HCT116 (cell line): ENCODE measurements at regions of chr7 and their contacts with region 1.

Region 1: DNA sequence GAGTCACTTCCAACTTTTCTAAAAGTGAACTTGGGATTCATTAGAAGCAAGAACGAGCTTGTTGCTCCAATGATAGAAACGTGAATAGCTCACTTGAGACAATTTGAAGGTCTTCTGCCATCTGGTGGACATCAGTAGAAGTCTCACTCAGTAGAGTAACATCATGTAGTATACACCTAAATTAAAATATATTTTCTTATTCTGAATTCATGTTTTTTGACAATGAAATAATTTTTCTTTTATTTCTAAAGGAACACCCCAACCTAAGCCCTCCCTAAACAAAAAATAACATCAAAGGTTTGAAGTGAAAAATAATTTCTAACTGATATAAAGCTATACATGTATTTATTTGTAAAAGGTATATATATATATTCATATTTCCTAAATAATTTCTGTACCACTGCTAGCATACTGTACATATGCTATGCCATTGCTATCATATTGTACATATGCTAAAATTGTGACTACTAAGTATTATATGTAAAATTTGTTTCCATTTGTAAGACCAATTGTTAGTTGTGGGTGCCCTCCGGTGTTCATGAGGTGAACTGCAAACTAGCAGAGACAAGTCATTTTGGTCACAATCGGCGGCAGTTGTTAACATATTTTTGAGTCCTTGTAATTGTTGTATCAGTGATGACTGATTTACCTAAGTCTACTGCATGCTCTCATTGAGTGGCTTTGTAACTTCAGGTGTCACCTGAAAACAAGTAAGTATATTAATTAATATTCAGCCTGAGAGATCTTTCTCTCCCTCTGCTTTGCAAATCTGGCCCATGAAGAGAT is 121.9 kb downstream of the PTPRZ1 start:
- DNase-seq: peak; percentile 78
- ATAC-seq: peak; percentile 93
- H3K4me3 ChIP-seq: no peak overlapping the region
- H3K27ac ChIP-seq: no peak overlapping the region
- H3K4me1 ChIP-seq: no peaks in the 10 kb centered on the region
- H3K27me3 ChIP-seq: no peaks in the 10 kb centered on the region
- CTCF ChIP-seq: peak; percentile 73 to 84 (median 75); a peak in 5 of 6 replicates
- POLR2A ChIP-seq: no peak
- RAD21 ChIP-seq: peak; percentile 85

Region 2: GRCh38 chr7:120792091-120792860 is 1202.5 kb before region 1 on chr7:
- CTCF ChIA-PET with region 1: interaction called, 3 read pairs
- POLR2A ChIA-PET with region 1: no interaction called
- RAD21 ChIA-PET with region 1: no interaction called
- intact Hi-C with region 1: loop called (anchors 1 kb)
- DNase-seq: peak; percentile 65
- ATAC-seq: peak; percentile 100
- H3K4me3 ChIP-seq: no peak overlapping the region
- H3K27ac ChIP-seq: no peak overlapping the region
- H3K4me1 ChIP-seq: peaks cover 2 to 10% of the 10 kb centered on the region in 2 experiments; a peak in 3 of 4 replicates
- H3K27me3 ChIP-seq: no peaks in the 10 kb centered on the region
- CTCF ChIP-seq: peak; percentile 72 to 97 (median 97)
- POLR2A ChIP-seq: no peak
- RAD21 ChIP-seq: peak; percentile 56

Region 3: GRCh38 chr7:121126801-121127534 is 867.9 kb before region 1 on chr7:
- CTCF ChIA-PET with region 1: interaction called, 17 read pairs
- POLR2A ChIA-PET with region 1: no interaction called
- RAD21 ChIA-PET with region 1: interaction called in 1 of 2 experiments, 3 read pairs
- intact Hi-C with region 1: loop called (anchors 2 kb)
- DNase-seq: peak; percentile 51
- ATAC-seq: no peak
- H3K4me3 ChIP-seq: no peak overlapping the region
- H3K27ac ChIP-seq: no peak overlapping the region; the same call in 1 of the 2 replicates
- H3K4me1 ChIP-seq: peaks cover 4 to 28% of the 10 kb centered on the region in 2 experiments; a peak in 3 of 4 replicates
- H3K27me3 ChIP-seq: no peaks in the 10 kb centered on the region
- CTCF ChIP-seq: peak; percentile 16 to 88 (median 47); a peak in 5 of 6 replicates
- POLR2A ChIP-seq: no peak
- RAD21 ChIP-seq: peak; percentile 88

Region 4: GRCh38 chr7:121395961-121396757 is 598.7 kb before region 1 on chr7 and contains the start of gene FAM3C:
- CTCF ChIA-PET with region 1: interaction called, 14 read pairs
- POLR2A ChIA-PET with region 1: no interaction called
- RAD21 ChIA-PET with region 1: no interaction called
- intact Hi-C with region 1: no loop called
- DNase-seq: peak; percentile 82
- ATAC-seq: peak; percentile 87
- H3K4me3 ChIP-seq: peak within 1 kb of the TSS; percentile 65 to 74
- H3K27ac ChIP-seq: peak within 1 kb of the TSS; percentile 95
- H3K4me1 ChIP-seq: peaks cover 40 to 77% of the 10 kb centered on the region in 2 experiments
- H3K27me3 ChIP-seq: no peaks in the 10 kb centered on the region
- CTCF ChIP-seq: peak; percentile 42 to 93 (median 71); a peak in 5 of 6 replicates
- POLR2A ChIP-seq: peak; percentile 72
- RAD21 ChIP-seq: peak; percentile 43
- total RNA-seq, gene FAM3C: 322 TPM

Region 5: DNA sequence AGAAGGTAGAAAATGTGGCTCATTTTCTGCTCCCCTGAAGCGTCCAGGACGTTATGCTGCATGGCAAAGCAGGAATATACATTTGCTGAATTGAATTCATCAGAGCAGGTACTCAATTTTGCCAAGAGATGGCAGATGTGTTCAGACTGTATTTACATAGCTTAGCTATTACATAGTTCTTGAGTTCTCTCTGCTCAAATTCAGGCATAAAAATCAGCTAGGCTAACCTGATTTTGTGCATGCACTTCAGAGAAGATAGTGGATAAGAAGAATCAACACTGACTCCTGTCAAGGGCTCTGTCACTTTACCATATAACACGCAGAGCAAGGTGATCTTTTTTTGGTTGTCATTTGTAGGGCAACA is 389.5 kb before region 1 on chr7:
- CTCF ChIA-PET with region 1: interaction called, 48 read pairs
- POLR2A ChIA-PET with region 1: interaction called, 4 read pairs
- RAD21 ChIA-PET with region 1: interaction called, 3 to 6 read pairs
- intact Hi-C with region 1: loop called (anchors 10 kb)
- DNase-seq: no peak
- ATAC-seq: peak; percentile 74
- H3K4me3 ChIP-seq: no peak overlapping the region
- H3K27ac ChIP-seq: no peak overlapping the region
- H3K4me1 ChIP-seq: 0 out of 4 replicates have a peak, but pooled peaks cover 0 to 5% of the 10 kb centered on the region in 2 experiments
- H3K27me3 ChIP-seq: no peaks in the 10 kb centered on the region
- CTCF ChIP-seq: peak in 1 of 3 experiments; percentile 29; a peak in 1 of 6 replicates
- POLR2A ChIP-seq: no peak
- RAD21 ChIP-seq: peak; percentile 53

Region 6: DNA sequence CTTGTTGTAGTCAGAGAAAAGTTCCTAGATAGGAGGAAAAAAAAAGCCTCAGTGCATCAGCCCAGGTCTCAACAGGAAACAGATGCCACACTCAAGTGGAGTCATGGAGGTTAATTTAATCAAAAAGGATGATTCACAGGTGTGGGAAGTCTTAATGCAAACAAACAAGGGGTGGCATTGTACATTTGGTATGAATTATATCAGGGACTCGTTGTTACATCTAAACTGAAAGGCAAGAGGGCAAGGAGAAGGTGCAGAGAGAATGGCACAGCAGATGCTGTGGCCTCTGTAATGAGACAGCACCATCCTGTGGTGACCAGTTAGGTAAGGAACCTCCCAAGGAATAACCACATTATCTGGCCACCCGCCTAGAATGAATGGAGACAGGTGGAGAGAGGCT is 11.9 kb after region 1 on chr7:
- CTCF ChIA-PET with region 1: interaction called, 22 read pairs
- POLR2A ChIA-PET with region 1: no interaction called
- RAD21 ChIA-PET with region 1: no interaction called
- intact Hi-C with region 1: no loop called
- DNase-seq: no peak
- ATAC-seq: peak; percentile 78
- H3K4me3 ChIP-seq: no peak overlapping the region
- H3K27ac ChIP-seq: no peak overlapping the region
- H3K4me1 ChIP-seq: peaks cover 0 to 8% of the 10 kb centered on the region in 2 experiments; a peak in 2 of 4 replicates
- H3K27me3 ChIP-seq: no peaks in the 10 kb centered on the region
- CTCF ChIP-seq: peak in 2 of 3 experiments; percentile 36 to 38; a peak in 4 of 6 replicates
- POLR2A ChIP-seq: no peak
- RAD21 ChIP-seq: peak; percentile 60

Region 7: DNA sequence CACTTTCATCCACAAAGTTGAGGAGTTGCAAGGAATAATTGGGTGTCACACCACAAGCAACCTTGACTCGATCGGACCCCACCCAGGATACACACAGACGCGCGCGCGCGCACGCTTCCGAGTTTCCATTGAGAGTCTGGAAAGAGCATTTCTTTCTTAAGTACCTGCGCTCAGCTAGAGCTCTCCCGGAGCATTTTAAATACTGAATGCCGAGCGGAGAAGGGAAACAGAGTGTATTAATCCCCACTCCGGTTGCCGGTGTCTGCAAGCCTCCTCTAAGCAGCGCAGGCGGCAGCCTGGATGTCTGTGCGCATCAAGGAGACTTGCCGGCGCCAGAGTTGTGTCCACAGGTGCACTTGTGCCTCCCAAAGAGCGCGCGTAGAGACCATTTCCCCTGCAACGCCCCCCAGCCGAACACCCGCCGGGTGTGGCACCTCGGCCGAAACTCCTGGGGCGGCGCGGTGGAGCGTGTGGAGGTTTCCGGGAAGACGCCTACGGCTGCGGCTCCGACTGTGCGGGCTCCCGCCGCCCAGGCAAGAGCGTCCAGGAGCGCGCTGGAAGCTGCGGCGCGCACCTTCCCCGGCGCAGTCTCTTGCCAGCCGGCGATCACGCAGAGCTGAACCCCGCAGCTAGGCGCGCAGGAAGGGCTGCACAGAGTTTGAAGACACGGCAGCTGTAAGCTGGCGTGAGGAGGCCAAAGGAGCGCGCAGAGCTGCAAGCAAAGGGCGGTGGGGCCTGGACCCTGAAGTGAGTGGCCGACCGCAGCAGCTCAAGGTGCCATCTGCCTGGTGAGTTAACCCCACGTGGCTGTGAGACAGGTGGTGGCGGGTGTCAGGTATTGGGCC is 310.9 kb after region 1 on chr7:
- CTCF ChIA-PET with region 1: no interaction called
- POLR2A ChIA-PET with region 1: no interaction called
- RAD21 ChIA-PET with region 1: no interaction called
- intact Hi-C with region 1: no loop called
- DNase-seq: peak; percentile 26
- ATAC-seq: peak; percentile 81
- H3K4me3 ChIP-seq: peak overlapping the region; percentile 69 to 77
- H3K27ac ChIP-seq: peak overlapping the region; percentile 44; the same call in 1 of the 2 replicates
- H3K4me1 ChIP-seq: peaks cover 0 to 12% of the 10 kb centered on the region in 2 experiments; a peak in 3 of 4 replicates
- H3K27me3 ChIP-seq: no peaks in the 10 kb centered on the region
- CTCF ChIP-seq: no peak
- POLR2A ChIP-seq: no peak
- RAD21 ChIP-seq: no peak